Prostate gland (tissue), 2 donors: ENCODE measurements at regions of chr3 and their contacts with region 1.

Region 1: GRCh38 chr3:143121241-143122088 is 1.9 kb downstream of the CHST2 start:
- DNase-seq: peak; percentile 12
- H3K4me3 ChIP-seq: peak overlapping the region; percentile 56 to 61
- H3K27ac ChIP-seq: no peak overlapping the region
- H3K4me1 ChIP-seq: no peaks in the 10 kb centered on the region
- H3K27me3 ChIP-seq: no peaks in the 10 kb centered on the region
- CTCF ChIP-seq: peak in 3 of 4 experiments; percentile 42 to 55 (median 53)
- POLR2A ChIP-seq: no peak

Region 2: DNA sequence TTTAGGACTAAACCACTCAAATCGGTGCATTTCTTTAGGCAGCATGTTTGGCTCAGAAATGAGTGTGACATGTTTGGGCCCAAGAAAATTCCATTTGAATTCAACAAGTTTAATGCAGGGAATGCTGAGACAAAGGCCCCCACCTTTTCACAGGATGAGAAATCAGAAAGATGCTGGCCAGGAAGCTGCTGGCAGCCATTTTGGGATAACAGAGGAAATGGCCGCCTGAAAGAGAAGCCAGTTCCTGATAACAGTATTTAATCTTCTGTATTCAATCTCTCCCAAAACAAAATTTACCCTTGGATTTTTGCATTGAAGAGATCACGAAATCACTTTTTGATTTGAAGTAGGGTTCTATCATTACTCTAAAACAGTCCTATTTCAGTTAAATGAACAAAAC is 375.9 kb after region 1 on chr3:
- intact Hi-C with region 1: loop called (anchors 10 kb)
- DNase-seq: no peak
- H3K4me3 ChIP-seq: no peak overlapping the region
- H3K27ac ChIP-seq: no peak overlapping the region
- H3K4me1 ChIP-seq: no peaks in the 10 kb centered on the region
- H3K27me3 ChIP-seq: no peaks in the 10 kb centered on the region
- CTCF ChIP-seq: no peak
- POLR2A ChIP-seq: no peak

Region 3: DNA sequence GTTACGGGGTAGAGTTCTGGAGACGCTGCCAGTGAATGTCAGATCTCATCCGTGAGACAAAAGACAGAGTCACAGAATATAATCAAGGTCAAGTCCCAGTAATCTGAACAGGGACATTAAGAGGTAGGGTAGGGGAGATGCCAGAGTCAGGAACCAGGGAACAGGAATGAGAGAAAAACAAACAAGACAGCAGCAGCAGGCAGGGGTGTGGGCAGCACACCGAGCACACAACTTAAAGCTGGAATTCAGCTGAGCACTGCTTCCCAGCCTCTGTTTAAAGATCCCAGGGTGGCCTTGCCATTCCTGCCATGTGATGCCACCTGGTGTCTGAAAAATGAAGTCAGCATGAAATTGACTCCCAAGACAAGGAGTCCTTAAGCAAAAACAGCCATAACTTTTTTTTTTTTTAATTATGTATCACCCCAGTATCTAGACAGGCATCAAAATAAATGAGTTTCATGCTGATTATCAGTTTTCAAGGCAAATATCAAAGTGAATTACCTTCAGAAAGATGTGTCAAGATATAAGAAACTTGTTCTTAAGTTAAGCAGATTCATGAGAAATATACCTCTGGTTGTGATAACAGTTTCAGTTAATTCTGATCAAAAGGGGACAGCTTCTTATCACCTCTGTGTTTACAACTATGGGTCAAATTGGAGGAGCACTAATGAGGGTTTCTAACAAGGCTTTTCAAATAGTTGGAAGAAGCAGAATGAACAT is 523.1 kb after region 1 on chr3:
- intact Hi-C with region 1: loop called (anchors 1 kb)
- DNase-seq: peak; percentile 73
- H3K4me3 ChIP-seq: no peak overlapping the region
- H3K27ac ChIP-seq: no peak overlapping the region
- H3K4me1 ChIP-seq: no peaks in the 10 kb centered on the region
- H3K27me3 ChIP-seq: no peaks in the 10 kb centered on the region
- CTCF ChIP-seq: peak; percentile 50 to 81 (median 64)
- POLR2A ChIP-seq: no peak

Region 4: DNA sequence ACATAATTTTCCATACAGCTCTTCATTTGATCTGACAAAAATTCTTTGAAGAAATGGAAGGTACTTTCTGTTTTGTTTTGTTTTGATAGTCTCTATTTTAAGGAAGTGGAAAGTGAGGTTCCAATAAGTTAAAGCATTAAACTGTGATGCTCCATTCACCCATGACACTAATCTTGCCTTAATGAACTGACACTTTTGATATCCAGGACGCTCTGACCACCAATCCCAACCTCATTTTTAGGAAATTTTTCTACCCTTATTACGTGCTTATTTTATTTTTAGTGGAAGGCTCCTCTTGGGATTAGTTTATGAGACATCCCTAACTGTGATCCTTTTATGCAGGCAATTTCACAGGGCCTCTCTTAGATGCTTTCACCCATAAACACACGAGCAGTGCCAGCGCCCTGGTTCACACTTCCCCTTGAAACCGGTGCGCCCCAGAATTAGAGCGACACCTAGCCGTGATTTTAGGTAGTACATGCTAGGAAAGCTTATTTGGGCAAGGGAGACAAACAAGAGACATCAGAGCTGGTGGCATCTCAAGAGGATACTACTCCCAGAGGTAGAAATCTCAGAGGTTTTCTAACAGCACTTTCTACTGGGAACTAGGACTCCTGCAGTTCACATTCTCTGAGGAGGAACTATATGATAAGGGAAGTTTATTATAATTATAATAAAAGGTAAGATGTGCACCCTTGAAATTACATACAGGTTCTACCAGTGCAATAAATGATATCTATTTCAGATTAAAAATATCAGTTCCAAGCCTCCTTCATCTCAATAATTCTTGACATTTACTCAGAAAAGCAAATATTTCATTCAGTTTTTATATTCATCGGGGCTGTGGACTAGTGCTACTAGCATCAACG is 552.9 kb after region 1 on chr3:
- intact Hi-C with region 1: loop called (anchors 2 kb)
- DNase-seq: peak; percentile 55
- H3K4me3 ChIP-seq: no peak overlapping the region
- H3K27ac ChIP-seq: no peak overlapping the region
- H3K4me1 ChIP-seq: no peaks in the 10 kb centered on the region
- H3K27me3 ChIP-seq: no peaks in the 10 kb centered on the region
- CTCF ChIP-seq: peak; percentile 48 to 82 (median 66)
- POLR2A ChIP-seq: no peak

Region 5: GRCh38 chr3:143751643-143752178 is 630.2 kb after region 1 on chr3:
- intact Hi-C with region 1: loop called (anchors 10 kb)
- DNase-seq: no peak
- H3K4me3 ChIP-seq: no peak overlapping the region
- H3K27ac ChIP-seq: no peak overlapping the region
- H3K4me1 ChIP-seq: no peaks in the 10 kb centered on the region
- H3K27me3 ChIP-seq: no peaks in the 10 kb centered on the region
- CTCF ChIP-seq: no peak
- POLR2A ChIP-seq: no peak